Activated CD4-positive, alpha-beta memory T cell treated with anti-CD3 and anti-CD28 coated beads, Interleukin-2, amount 10 ng/mL, durations not matched to agents 7 days and 5 days (primary cell): ENCODE measurements at regions of chr3 and their contacts with region 1.

Region 1: GRCh38 chr3:49339945-49340800 is at the start of gene USP4:
- DNase-seq: peak; percentile 95
- H3K4me3 Mint-ChIP-seq: peak within 1 kb of the TSS; percentile 95
- H3K27ac Mint-ChIP-seq: peak within 1 kb of the TSS; percentile 98
- H3K4me1 Mint-ChIP-seq: peaks cover 42% of the 10 kb centered on the region
- H3K27me3 Mint-ChIP-seq: no peaks in the 10 kb centered on the region
- total RNA-seq, gene USP4: 77.8 to 85.0 TPM

Region 2: GRCh38 chr3:48674505-48674904 is 665.7 kb before region 1 on chr3:
- CTCF ChIA-PET with region 1: no interaction called
- POLR2A ChIA-PET with region 1: no interaction called
- DNase-seq: no peak
- H3K4me3 Mint-ChIP-seq: no peak overlapping the region
- H3K27ac Mint-ChIP-seq: no peak overlapping the region
- H3K4me1 Mint-ChIP-seq: peaks cover 7% of the 10 kb centered on the region
- H3K27me3 Mint-ChIP-seq: no peaks in the 10 kb centered on the region

Region 3: DNA sequence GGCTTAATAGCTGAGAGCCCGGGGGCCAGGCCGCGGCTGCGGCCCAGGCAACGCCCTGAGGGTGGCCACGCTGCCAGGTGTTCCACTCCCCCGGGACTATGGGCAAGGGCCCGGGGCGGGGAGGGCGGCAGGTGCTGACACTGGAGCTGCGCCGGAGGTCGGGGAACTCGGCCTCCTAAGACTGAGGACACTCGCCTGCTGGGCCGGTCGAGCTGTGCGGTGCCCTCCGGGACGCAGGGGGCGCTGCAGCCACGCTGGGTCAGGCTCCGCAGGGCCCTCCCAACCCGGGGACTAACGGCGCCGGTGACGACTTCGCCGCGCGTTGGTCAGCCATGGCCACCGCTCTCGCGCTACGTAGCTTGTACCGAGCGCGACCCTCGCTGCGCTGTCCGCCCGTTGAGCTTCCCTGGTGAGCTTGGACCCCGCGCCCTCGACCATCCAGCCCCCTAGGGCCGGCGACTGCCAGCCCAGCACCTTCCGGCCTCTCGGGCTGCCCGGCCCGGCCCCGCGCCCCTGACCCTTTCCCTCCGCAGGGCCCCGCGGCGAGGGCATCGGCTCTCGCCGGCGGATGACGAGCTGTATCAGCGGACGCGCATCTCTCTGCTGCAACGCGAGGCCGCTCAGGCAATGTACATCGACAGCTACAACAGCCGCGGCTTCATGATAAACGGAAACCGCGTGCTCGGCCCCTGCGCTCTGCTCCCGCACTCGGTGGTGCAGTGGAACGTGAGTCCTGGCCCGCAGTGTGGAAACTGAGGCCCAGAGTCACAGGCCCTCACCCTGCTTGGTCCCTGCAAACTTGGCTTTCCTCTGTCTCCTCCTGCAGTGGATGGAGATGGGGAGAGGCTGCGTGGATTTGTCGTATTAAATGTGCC is 318.1 kb before region 1 on chr3 and contains the start of gene NDUFAF3:
- CTCF ChIA-PET with region 1: no interaction called
- POLR2A ChIA-PET with region 1: interaction called, 10 read pairs
- DNase-seq: peak; percentile 93
- H3K4me3 Mint-ChIP-seq: peak within 1 kb of the TSS; percentile 98
- H3K27ac Mint-ChIP-seq: peak within 1 kb of the TSS; percentile 98
- H3K4me1 Mint-ChIP-seq: peaks cover 67% of the 10 kb centered on the region
- H3K27me3 Mint-ChIP-seq: no peaks in the 10 kb centered on the region
- total RNA-seq, gene NDUFAF3: 98.1 to 108 TPM

Region 4: DNA sequence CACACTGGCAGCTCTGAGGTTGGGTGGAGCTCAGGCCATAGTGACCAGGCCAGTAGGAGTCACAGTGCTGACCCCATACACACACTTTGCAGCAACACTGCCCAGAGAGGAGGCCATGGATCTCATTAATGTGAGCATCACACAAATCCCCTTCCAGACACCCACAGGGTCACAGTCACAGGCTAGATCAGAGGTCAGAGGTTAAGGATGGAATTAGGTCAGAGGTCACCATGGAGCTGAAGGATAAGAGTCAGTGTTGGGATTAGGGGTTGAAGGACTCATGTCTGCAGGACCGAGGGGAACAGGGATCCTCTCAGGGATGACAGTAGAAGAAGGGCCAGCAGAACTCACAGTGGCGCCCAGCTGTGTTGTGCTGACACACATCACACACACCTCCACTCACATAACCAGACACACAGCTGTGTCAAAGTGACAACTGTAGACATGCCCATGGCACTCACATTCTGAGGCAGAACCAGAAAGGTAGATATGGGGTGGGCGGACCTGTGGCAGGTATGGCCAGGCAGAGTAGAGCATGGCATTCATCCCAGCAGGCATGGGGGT is 186.7 kb before region 1 on chr3:
- CTCF ChIA-PET with region 1: no interaction called
- POLR2A ChIA-PET with region 1: no interaction called
- DNase-seq: no peak
- H3K4me3 Mint-ChIP-seq: no peak overlapping the region
- H3K27ac Mint-ChIP-seq: no peak overlapping the region
- H3K4me1 Mint-ChIP-seq: peaks cover 2% of the 10 kb centered on the region
- H3K27me3 Mint-ChIP-seq: no peaks in the 10 kb centered on the region

Region 5: GRCh38 chr3:49327485-49327884 is 12.7 kb before region 1 on chr3:
- CTCF ChIA-PET with region 1: interaction called, 11 read pairs
- POLR2A ChIA-PET with region 1: interaction called, 10 read pairs
- DNase-seq: no peak
- H3K4me3 Mint-ChIP-seq: no peak overlapping the region
- H3K27ac Mint-ChIP-seq: no peak overlapping the region
- H3K4me1 Mint-ChIP-seq: peaks cover 1% of the 10 kb centered on the region
- H3K27me3 Mint-ChIP-seq: no peaks in the 10 kb centered on the region

Region 6: DNA sequence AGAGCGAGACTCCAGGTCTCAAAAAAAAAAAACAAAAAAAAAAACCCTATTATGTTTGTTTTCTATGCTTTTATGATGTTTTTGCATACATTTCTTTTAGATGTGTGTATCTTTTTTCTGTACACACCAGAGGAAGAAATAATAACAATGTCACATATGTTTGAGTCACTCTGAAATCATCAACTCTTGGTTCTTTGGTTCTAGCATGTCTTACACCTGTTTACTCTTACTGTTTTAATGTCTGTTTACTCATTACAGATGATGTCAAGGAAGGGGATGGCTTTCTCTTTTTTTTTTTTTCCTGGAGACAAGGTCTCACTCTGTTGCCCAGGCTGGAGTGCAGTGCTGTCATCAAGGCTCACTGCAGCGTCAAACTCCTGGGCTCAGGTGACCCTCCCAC is 47.5 kb after region 1 on chr3:
- CTCF ChIA-PET with region 1: interaction called, 4 read pairs
- POLR2A ChIA-PET with region 1: interaction called, 11 read pairs
- DNase-seq: no peak
- H3K4me3 Mint-ChIP-seq: no peak overlapping the region
- H3K27ac Mint-ChIP-seq: peak overlapping the region; percentile 23
- H3K4me1 Mint-ChIP-seq: peaks cover 29% of the 10 kb centered on the region
- H3K27me3 Mint-ChIP-seq: no peaks in the 10 kb centered on the region

Region 7: DNA sequence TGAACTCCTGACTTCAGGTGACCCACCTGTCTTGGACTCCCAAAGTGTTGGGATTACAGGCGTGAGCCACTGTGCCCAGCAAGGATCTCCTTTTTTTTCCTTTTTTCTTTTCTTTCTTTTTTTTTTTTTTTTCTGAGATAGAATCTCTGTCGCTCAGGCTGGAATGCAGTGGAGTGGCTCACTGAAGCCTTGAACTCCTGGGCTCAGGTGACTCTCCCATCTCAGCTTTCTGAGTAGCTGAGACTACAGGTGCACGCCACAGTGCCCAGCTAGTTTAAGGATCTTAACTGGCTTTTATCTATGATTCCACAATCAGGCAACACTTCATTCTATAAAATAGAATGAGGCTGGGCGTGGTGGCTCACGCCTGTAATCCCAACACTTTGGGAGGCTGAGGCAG is 105.2 kb after region 1 on chr3:
- CTCF ChIA-PET with region 1: interaction called, 36 read pairs
- POLR2A ChIA-PET with region 1: interaction called, 30 read pairs
- DNase-seq: no peak
- H3K4me3 Mint-ChIP-seq: no peak overlapping the region
- H3K27ac Mint-ChIP-seq: peak overlapping the region; percentile 44
- H3K4me1 Mint-ChIP-seq: peaks cover 21% of the 10 kb centered on the region
- H3K27me3 Mint-ChIP-seq: no peaks in the 10 kb centered on the region

Region 8: DNA sequence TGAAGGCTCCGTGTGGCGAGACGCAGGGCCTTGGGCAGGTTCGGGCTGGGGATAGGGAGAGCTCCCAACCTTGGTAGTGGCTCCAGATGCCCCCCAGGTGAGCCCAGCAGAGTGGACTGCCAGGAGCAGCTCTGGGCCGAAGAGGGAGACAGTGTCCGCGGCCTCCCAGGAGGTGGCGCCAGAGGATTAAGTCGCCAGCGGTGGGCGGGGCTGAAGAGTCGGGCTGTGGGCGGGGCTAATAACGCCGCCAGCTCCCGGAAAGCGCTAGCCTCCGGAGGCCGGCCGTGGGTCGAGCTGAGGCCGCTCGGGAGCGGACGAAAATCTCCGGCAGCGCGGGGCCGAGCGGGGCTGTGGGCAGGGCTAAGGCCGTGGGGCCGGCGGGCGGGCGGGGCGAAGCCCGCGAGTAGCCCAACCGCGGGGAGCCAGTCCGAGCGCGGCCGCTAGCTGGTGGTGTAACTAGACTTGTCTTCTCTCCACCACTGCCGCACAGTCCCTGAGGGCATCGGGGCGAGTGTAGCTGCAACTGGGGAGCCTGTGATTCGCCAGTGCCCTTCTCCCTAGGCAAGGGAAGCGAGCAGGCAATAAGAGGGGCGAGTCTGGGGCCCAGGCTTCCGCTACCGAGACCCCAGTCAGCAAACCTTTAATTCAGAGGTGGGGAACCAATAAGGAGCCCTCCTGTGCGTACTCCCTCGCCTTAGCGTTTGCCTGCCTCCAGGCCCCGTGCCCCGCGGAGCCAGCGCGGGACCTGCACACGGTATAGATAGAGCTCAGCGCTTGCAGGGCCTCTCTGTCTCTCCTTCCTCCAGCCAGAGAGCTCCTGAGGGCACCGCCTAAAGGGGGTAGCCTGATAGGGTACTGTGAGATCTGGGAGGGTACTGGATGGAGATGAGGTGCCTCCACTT is 199.7 kb after region 1 on chr3:
- CTCF ChIA-PET with region 1: interaction called, 15 read pairs
- POLR2A ChIA-PET with region 1: no interaction called
- DNase-seq: peak; percentile 92
- H3K4me3 Mint-ChIP-seq: peak overlapping the region; percentile 66
- H3K27ac Mint-ChIP-seq: no peak overlapping the region
- H3K4me1 Mint-ChIP-seq: peaks cover 7% of the 10 kb centered on the region
- H3K27me3 Mint-ChIP-seq: peaks cover 16% of the 10 kb centered on the region